Body of pancreas (tissue), 4 donors: ENCODE measurements at regions of chr5 and their contacts with region 1.

Region 1: DNA sequence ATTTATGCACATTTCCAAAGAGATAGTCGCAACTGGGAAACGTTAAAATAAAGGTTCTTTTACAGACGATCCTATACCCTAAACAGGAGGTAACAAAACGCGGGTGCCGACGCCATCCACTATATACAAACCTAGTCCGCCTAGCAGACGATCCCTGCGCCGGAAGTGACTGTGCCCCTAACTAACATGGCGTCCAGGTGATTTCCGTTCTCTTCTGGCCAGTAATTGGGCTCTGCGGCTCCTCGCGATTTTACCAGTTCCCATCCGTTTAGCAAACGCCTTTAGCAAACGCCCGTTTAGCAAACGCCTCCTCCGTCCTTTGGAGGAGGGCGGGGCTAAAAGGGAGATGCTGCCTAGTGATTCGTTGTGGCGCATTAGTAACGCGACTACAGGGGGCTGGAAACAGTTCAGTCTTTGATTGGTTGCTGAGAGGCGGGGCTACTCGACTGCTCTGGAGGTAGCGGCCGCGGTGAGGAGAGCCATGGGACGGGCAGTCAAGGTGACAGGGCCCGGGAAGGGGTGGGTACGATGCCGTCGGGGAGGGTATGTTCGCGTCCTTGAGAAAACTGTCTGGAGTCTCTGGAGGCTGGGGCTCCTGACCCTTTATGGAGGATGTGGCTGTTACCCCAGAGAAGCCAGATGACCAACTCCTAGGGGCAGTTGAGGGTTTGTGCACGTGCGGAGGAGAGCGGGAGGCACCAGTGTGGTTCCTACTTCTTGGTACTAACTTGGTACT is at the start of gene LYRM7:
- DNase-seq: peak; percentile 97 to 99 (median 98)
- ATAC-seq: peak; percentile 98
- H3K4me3 ChIP-seq: peak within 1 kb of the TSS; percentile 17 to 32
- H3K27ac ChIP-seq: peak within 1 kb of the TSS; percentile 63 to 76 (median 72)
- H3K4me1 ChIP-seq: peaks cover 14% of the 10 kb centered on the region
- H3K27me3 ChIP-seq: no peaks in the 10 kb centered on the region
- CTCF ChIP-seq: peak in 2 of 7 experiments; percentile 16 to 26
- POLR2A ChIP-seq: peak in 2 of 3 donors; percentile 73 to 78
- total RNA-seq, gene LYRM7: 3.4 to 3.6 TPM

Region 2: DNA sequence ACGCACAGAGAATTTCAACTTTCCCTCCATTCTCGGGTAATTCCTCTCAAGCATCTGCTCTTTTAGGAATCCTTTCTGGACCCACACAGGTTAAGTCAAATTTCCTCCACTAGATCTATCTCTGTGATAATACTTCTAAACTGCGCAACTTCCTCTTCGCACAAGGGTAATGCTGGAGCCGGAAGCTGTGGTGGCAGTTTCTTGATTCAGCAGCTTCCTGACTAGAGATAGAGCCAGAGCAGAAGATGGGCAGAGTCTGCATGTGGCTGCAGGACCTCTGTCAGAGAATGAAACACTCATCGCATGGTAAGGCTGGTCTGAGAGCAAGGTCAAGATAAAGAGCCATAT is 82.1 kb after region 1 on chr5:
- intact Hi-C with region 1: loop called (anchors 10 kb)
- DNase-seq: peak in 2 of 4 donors; percentile 33 to 72
- ATAC-seq: no peak
- H3K4me3 ChIP-seq: no peak overlapping the region
- H3K27ac ChIP-seq: peak overlapping the region in 1 of 4 donors; percentile 45
- H3K4me1 ChIP-seq: no peaks in the 10 kb centered on the region
- H3K27me3 ChIP-seq: no peaks in the 10 kb centered on the region
- CTCF ChIP-seq: no peak
- POLR2A ChIP-seq: no peak